ENCODE measurements at regions of chr7 and their contacts with region 1.

Region 1: DNA sequence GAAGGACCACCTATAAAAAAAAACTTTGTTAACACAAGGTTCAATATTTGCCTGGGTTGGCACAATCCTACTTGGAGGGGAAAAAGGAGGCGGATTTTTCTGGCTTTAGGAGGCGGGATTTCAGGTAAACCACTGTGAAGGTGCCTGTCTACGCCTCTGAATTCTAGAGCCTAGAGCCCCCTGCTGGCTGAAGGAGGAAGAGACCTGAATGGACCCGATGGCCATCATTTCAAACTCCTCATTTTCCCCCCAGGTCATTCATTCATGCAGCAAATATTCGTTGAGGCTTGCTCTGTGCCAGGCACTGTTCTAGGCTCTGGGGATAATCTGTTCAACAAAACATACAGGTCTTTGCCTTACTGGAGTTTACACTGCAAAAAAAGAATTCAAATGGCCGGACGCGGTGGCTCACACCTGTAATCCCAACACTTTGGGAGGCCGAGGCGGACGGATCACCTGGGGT is 90.3 kb upstream of the NFE2L3 start:
- DNase-seq: no peak
- H3K4me3 ChIP-seq: no peak overlapping the region
- H3K27ac ChIP-seq: no peak overlapping the region
- H3K4me1 ChIP-seq: peaks cover 8% of the 10 kb centered on the region
- H3K27me3 ChIP-seq: no peaks in the 10 kb centered on the region
- CTCF ChIP-seq: peak; percentile 40 to 58 (median 57)
- POLR2A ChIP-seq: no peak

Region 2: DNA sequence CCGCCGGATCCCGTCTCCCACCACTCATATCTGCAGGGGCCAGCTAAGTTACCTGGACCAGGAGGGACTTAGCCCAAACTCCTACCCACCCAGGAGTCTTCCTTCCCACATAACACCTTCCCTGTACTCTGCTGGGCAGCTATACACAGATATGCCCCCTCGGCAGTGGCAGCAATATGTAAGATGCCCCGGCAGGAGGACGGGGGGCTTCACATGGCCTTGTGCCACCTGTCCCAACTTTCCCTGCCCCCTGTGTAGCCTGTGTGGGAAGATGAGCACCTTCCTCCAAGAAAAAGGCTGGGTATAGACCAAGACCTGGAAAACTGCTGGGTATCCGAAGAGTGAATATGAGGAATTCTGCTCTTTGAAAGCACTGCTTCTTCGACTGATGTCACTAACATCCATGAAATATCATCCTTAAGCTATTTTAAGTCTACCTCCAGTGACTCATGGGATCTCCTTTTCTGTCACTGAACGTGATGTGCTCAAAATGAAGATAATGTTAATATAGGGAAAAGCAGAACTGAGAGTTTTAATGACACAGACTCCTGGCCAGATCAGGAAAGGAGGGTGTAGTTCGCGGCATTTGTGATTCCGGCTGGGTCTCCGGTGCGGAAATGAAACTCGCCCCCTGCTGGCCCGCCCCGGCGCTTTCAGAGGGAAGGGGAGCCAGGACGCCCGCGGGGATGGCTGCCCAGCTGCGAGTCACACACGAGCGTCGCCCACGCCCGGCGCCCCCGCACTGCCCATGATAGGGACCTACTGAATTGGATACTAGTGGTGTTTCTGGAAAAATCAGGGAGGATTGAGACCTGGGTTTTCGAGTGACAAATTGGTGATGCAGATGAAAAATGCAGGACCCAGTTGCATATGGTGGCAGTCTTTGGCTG is 166.6 kb before region 1 on chr7:
- intact Hi-C with region 1: loop called (anchors 10 kb)
- DNase-seq: peak in 1 of 2 donors; percentile 82
- H3K4me3 ChIP-seq: peak overlapping the region in 1 of 2 donors; percentile 15
- H3K27ac ChIP-seq: no peak overlapping the region
- H3K4me1 ChIP-seq: peaks cover 16% of the 10 kb centered on the region
- H3K27me3 ChIP-seq: no peaks in the 10 kb centered on the region
- CTCF ChIP-seq: peak; percentile 30 to 57 (median 41)
- POLR2A ChIP-seq: no peak

Region 3: GRCh38 chr7:26038201-26038990 is 23.3 kb before region 1 on chr7:
- intact Hi-C with region 1: no loop called
- DNase-seq: no peak
- H3K4me3 ChIP-seq: no peak overlapping the region
- H3K27ac ChIP-seq: no peak overlapping the region
- H3K4me1 ChIP-seq: no peaks in the 10 kb centered on the region
- H3K27me3 ChIP-seq: no peaks in the 10 kb centered on the region
- CTCF ChIP-seq: no peak
- POLR2A ChIP-seq: no peak

Region 4: DNA sequence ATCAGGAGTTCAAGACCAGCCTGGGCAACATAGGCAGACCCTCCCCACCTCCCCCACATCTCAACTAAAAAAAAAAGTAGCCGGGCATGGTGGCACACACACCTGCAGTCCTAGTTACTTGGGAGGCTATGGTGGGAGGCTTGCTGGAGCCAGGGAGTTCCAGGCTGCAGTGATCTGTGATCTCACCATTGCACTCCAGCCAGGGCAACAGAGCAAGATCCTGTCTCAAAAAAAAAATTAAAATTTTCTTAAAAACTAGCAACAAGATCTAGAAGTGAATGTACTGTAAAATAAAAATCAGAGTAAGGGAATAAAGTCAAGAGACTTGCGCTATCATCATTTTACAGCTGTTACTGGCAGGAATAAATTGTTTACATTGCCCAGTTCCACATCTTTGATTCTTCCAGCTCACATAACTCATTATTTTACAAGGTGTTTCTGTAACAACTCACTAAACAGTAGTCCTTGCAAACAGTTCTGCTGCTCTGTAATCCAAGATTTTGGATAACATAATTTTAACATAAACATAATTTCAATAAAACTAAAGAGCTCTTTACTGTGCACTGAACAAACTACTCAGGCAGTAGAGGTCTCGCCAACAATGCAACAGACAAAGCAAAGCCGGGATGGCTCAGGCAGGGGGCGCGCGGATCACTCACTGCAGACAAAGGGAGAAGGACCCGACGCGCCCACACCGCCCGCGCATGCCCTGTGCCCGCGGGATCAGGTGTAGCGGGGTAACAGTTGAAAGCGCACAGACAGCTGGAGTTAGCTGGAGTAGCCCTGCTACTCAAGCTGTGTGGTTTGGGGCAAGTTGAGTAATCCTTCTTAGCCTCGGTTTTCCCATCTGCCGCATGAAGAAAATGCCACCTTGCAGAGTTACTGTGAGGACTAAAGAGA is 17.0 kb after region 1 on chr7:
- intact Hi-C with region 1: no loop called
- DNase-seq: no peak
- H3K4me3 ChIP-seq: no peak overlapping the region
- H3K27ac ChIP-seq: no peak overlapping the region
- H3K4me1 ChIP-seq: no peaks in the 10 kb centered on the region
- H3K27me3 ChIP-seq: no peaks in the 10 kb centered on the region
- CTCF ChIP-seq: peak in 1 of 3 experiments; percentile 24
- POLR2A ChIP-seq: no peak

Region 5: GRCh38 chr7:26101361-26102151 is 39.8 kb after region 1 on chr7:
- intact Hi-C with region 1: no loop called
- DNase-seq: no peak
- H3K4me3 ChIP-seq: peak overlapping the region; percentile 8 to 10
- H3K27ac ChIP-seq: no peak overlapping the region
- H3K4me1 ChIP-seq: peaks cover 10% of the 10 kb centered on the region
- H3K27me3 ChIP-seq: no peaks in the 10 kb centered on the region
- CTCF ChIP-seq: no peak
- POLR2A ChIP-seq: no peak

Region 6: DNA sequence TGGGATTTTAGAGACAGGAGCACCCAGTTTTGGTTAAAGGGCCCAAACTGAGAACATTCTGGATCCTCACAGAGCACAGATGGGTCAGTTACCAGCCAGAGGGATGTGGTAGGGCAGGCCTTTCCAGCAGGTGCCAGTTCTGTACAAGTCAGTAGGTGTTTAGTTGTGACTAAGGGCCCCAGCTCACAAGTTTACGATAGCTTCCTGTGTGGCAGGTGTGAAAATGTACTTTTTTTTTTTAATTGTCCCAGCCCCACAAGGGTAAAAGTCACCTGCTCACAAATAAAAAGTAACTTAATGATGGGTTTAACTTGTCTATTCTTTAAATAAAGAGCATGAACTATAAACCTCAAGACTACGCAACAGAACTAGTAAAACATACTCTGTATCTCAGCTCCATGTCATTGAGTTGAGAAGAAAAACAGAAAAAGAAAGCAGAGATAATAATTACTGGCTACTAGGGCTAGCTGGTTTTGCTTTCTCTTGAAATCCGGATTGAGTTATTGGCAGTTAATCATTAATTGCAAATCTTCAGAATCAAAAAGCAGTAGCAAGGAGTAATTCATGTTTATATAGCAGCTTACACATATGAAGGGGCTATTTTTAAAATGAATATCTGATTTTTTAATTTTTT is 105.7 kb after region 1 on chr7:
- intact Hi-C with region 1: no loop called
- DNase-seq: no peak
- H3K4me3 ChIP-seq: no peak overlapping the region
- H3K27ac ChIP-seq: no peak overlapping the region
- H3K4me1 ChIP-seq: no peaks in the 10 kb centered on the region
- H3K27me3 ChIP-seq: no peaks in the 10 kb centered on the region
- CTCF ChIP-seq: no peak
- POLR2A ChIP-seq: no peak